ENCODE measurements at regions of chr22 and their contacts with region 1.

Region 1: GRCh38 chr22:37658133-37659065 is at the start of gene PDXP:
- DNase-seq: peak; percentile 99
- ATAC-seq: peak; percentile 88
- H3K4me3 ChIP-seq: peak within 1 kb of the TSS; percentile 49 to 74 (median 64)
- H3K4me3 Mint-ChIP-seq: peak within 1 kb of the TSS; percentile 98
- H3K27ac ChIP-seq: peak within 1 kb of the TSS; percentile 72 to 84
- H3K27ac Mint-ChIP-seq: peak within 1 kb of the TSS; percentile 99
- H3K4me1 ChIP-seq: peaks cover 38 to 46% of the 10 kb centered on the region in 2 donors
- H3K4me1 Mint-ChIP-seq: peaks cover 47% of the 10 kb centered on the region
- H3K27me3 ChIP-seq: no peaks in the 10 kb centered on the region
- H3K27me3 Mint-ChIP-seq: no peaks in the 10 kb centered on the region
- CTCF ChIP-seq: no peak
- total RNA-seq, gene PDXP: 16.6 and 16.9 TPM in 2 replicates

Region 2: DNA sequence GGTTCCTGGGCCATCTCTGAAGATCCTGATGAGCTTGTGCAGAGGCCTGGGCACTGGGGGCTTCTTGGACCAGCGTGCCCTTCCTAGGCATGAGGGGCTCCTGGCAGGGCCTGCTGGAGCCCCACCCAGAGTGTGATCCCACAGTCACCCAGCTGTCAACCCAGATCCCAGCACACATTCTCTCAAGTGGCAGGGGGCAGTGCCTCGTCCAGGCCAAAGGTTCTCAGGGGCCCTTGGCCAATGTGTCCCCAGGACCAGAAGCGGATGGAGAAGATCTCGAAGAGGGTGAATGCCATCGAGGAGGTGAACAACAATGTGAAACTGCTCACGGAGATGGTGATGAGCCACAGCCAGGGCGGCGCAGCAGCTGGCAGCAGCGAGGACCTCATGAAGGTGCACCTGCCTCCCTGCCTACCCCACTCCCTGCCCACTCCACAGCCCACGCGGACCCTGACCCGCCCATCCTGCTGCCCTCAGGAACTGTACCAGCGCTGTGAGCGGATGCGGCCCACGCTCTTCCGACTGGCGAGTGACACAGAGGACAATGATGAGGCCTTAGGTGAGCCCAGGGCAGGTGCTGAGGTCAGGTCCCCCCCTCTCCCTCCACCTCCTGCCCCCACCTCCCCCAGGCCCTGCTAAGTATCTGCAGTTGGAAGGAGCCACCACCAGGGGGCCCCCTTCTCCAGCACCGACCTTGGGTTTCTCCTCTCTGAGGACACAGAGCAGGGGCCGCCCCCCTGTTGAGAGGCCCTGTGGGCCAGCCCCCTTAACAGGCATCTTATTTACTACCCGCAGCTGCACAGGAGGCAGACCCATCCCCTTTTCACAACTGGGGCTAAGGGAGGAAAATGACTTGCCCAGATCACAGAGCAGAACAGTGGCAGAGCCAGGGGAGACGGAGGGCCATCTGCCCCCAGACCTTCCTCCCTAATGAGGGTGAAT is 35.1 kb before region 1 on chr22:
- CTCF ChIA-PET with region 1: interaction called, 10 read pairs
- POLR2A ChIA-PET with region 1: interaction called, 9 read pairs
- intact Hi-C with region 1: no loop called
- DNase-seq: peak; percentile 83
- ATAC-seq: peak; percentile 83
- H3K4me3 ChIP-seq: no peak overlapping the region
- H3K4me3 Mint-ChIP-seq: peak overlapping the region; percentile 61
- H3K27ac ChIP-seq: peak overlapping the region; percentile 47 to 52
- H3K27ac Mint-ChIP-seq: peak overlapping the region; percentile 92
- H3K4me1 ChIP-seq: peaks cover 40 to 69% of the 10 kb centered on the region in 2 donors
- H3K4me1 Mint-ChIP-seq: peaks cover 60% of the 10 kb centered on the region
- H3K27me3 ChIP-seq: no peaks in the 10 kb centered on the region
- H3K27me3 Mint-ChIP-seq: no peaks in the 10 kb centered on the region
- CTCF ChIP-seq: peak; percentile 86

Region 3: DNA sequence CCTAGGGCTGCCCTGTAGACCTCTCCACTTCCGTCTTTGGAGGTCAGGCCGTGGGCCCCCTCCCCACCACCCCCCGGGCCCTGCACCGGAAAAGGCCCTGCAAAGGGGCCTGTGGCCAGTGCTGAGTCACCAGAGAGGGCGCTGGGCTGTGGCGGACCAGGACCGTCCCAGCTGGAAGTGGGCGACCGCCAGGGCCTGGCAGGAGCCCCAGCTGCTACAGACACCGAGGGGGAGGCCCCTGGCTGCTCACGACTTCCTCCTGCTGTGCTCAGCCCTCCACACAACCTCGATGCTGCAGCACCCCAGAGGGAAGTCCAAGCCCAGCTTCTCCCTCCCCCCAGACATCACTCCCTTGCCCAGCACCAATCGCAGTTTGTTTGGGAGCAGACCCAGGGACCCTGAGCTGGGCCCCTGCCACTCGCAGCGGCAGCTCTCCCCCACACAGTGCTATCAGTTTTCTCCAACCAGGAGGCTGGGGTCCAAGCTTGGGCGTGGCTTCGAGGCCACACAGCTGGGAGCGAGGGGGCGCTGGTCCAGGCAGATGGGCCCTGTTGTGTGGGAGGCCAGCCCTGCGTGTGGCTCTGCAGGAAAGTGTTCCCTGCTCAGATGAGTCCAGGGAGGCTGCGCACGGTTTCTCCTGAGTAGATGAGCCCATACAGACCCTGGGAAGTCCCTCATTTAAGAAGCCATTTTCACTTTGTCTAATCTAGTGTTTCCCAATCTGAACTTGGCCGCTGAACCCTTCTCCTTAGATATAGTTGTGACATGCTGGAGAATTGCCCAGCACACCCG is 24.6 kb before region 1 on chr22:
- CTCF ChIA-PET with region 1: interaction called, 14 read pairs
- POLR2A ChIA-PET with region 1: interaction called, 17 read pairs
- intact Hi-C with region 1: no loop called
- DNase-seq: peak; percentile 88
- ATAC-seq: peak; percentile 76
- H3K4me3 ChIP-seq: peak overlapping the region in 4 of 5 experiments; percentile 30 to 56 (median 40)
- H3K4me3 Mint-ChIP-seq: peak overlapping the region; percentile 87
- H3K27ac ChIP-seq: peak overlapping the region; percentile 89 to 94
- H3K27ac Mint-ChIP-seq: peak overlapping the region; percentile 97
- H3K4me1 ChIP-seq: peaks cover 61 to 68% of the 10 kb centered on the region in 2 donors
- H3K4me1 Mint-ChIP-seq: peaks cover 60% of the 10 kb centered on the region
- H3K27me3 ChIP-seq: no peaks in the 10 kb centered on the region
- H3K27me3 Mint-ChIP-seq: no peaks in the 10 kb centered on the region
- CTCF ChIP-seq: peak; percentile 19

Region 4: DNA sequence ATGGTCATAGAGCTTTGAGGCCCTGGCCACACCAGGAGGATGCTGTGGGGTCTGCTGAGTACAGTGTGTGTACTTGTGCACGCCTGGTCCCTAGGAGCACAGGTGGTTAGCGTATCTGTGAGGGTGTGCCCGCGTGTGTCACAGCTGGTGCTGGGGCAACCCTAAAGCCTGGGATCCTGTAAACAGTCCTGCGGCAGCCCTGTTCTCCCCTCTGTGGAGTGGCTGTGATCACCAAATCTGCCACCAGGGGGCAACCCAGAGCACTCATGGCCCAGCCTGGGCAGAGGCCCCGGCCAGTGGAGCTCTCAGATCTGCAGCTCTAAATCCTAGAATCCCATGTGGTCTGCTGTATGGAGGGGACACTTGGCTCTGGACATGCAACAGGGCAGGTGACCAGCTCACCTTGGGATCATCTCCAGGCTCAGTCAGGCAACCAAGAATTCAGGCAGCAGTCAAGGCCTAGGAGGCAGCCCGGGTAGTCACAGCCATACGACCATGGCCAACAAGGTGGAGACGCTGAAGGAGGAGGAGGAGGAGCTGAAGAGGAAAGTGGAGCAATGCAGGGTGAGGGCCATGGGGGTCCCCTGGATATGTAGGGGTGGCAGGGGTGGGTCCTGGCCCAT is 15.1 kb before region 1 on chr22:
- CTCF ChIA-PET with region 1: interaction called, 164 read pairs
- POLR2A ChIA-PET with region 1: interaction called, 12 read pairs
- intact Hi-C with region 1: loop called (anchors 1 kb)
- DNase-seq: peak; percentile 86
- ATAC-seq: peak; percentile 75
- H3K4me3 ChIP-seq: no peak overlapping the region
- H3K4me3 Mint-ChIP-seq: peak overlapping the region; percentile 56
- H3K27ac ChIP-seq: no peak overlapping the region
- H3K27ac Mint-ChIP-seq: peak overlapping the region; percentile 87
- H3K4me1 ChIP-seq: peaks cover 24 to 39% of the 10 kb centered on the region in 2 donors
- H3K4me1 Mint-ChIP-seq: peaks cover 35% of the 10 kb centered on the region
- H3K27me3 ChIP-seq: no peaks in the 10 kb centered on the region
- H3K27me3 Mint-ChIP-seq: no peaks in the 10 kb centered on the region
- CTCF ChIP-seq: peak; percentile 91

Region 5: GRCh38 chr22:37676736-37677492 is 18.5 kb after region 1 on chr22:
- CTCF ChIA-PET with region 1: interaction called, 462 read pairs
- POLR2A ChIA-PET with region 1: interaction called, 44 read pairs
- intact Hi-C with region 1: loop called (anchors 1 kb)
- DNase-seq: peak; percentile 95
- ATAC-seq: peak; percentile 83
- H3K4me3 ChIP-seq: peak overlapping the region; percentile 73 to 92 (median 81)
- H3K4me3 Mint-ChIP-seq: peak overlapping the region; percentile 96
- H3K27ac ChIP-seq: peak overlapping the region; percentile 98
- H3K27ac Mint-ChIP-seq: peak overlapping the region; percentile 97
- H3K4me1 ChIP-seq: peaks cover 34 to 63% of the 10 kb centered on the region in 2 donors
- H3K4me1 Mint-ChIP-seq: peaks cover 56% of the 10 kb centered on the region
- H3K27me3 ChIP-seq: no peaks in the 10 kb centered on the region
- H3K27me3 Mint-ChIP-seq: no peaks in the 10 kb centered on the region
- CTCF ChIP-seq: no peak

Region 6: DNA sequence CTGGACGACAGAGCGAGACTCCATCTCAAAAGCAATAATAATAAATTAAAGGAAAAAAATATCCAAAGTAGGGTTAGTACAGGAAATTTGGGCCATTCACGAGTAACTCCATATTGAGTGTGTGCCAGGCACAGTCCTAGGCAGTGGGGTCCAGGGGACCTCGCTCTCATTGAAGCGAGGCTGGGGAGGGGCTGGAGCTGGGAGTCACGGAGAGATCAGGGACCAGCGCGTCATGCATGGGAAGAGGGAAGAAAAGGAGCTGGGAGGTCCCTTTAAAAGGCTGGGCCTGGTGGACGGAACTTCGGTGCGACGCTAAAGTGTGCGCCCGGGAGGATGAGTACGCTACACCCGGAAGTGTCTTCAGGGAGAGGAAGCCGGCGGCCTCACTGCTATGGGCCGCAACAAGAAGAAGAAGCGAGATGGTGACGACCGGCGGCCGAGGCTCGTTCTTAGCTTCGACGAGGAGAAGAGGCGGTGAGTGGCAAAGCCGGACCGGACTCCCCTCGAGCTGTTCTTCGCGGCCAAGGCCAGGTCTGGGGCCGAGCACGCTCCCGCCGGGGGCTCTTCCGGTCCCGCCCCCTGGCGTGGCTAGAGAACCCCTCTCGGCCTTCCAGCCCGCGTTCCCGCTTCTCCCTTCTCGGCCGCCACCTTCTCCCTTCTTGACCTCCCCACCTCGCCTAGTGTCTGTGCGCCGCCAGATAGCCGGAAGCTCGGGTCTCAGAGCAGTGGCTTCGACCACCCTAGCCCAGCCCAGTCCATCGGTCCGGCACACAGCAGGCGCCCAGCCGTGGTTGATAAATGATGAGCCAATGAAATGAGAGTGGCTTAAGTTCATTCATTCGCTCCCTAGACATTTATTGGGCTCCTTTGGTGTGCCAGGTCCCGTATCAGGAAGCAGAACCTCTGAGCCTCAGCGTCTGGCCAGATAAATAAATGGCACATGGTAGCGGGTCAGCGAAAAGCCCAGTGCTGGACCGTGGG is 27.9 kb after region 1 on chr22 and contains the start of gene NOL12:
- CTCF ChIA-PET with region 1: interaction called, 462 read pairs
- POLR2A ChIA-PET with region 1: interaction called, 8 read pairs
- intact Hi-C with region 1: loop called (anchors 1 kb)
- DNase-seq: peak; percentile 93
- ATAC-seq: peak; percentile 86
- H3K4me3 ChIP-seq: peak within 1 kb of the TSS; percentile 79 to 98 (median 88)
- H3K4me3 Mint-ChIP-seq: peak within 1 kb of the TSS; percentile 99
- H3K27ac ChIP-seq: peak within 1 kb of the TSS; percentile 70 to 81
- H3K27ac Mint-ChIP-seq: peak within 1 kb of the TSS; percentile 95
- H3K4me1 ChIP-seq: peaks cover 10 to 30% of the 10 kb centered on the region in 2 donors
- H3K4me1 Mint-ChIP-seq: peaks cover 28% of the 10 kb centered on the region
- H3K27me3 ChIP-seq: no peaks in the 10 kb centered on the region
- H3K27me3 Mint-ChIP-seq: no peaks in the 10 kb centered on the region
- CTCF ChIP-seq: no peak
- total RNA-seq, gene NOL12: 34.7 and 38.5 TPM in 2 replicates

Region 7: GRCh38 chr22:37745548-37746365 is 87.4 kb after region 1 on chr22:
- CTCF ChIA-PET with region 1: no interaction called
- POLR2A ChIA-PET with region 1: no interaction called
- intact Hi-C with region 1: loop called (anchors 1 kb)
- DNase-seq: peak; percentile 90
- ATAC-seq: peak; percentile 96
- H3K4me3 ChIP-seq: peak overlapping the region; percentile 66 to 85 (median 73)
- H3K4me3 Mint-ChIP-seq: peak overlapping the region; percentile 93
- H3K27ac ChIP-seq: peak overlapping the region in 1 of 2 donors; percentile 74
- H3K27ac Mint-ChIP-seq: peak overlapping the region; percentile 87
- H3K4me1 ChIP-seq: peaks cover 14 to 20% of the 10 kb centered on the region in 2 donors
- H3K4me1 Mint-ChIP-seq: peaks cover 24% of the 10 kb centered on the region
- H3K27me3 ChIP-seq: no peaks in the 10 kb centered on the region
- H3K27me3 Mint-ChIP-seq: no peaks in the 10 kb centered on the region
- CTCF ChIP-seq: no peak

Measured in B cell (primary cell).